Prostate gland (tissue), 2 donors: ENCODE measurements at regions of chr13 and their contacts with region 1.

Region 1: GRCh38 chr13:72781451-72782439 is at the starts of genes DIS3 and PIBF1:
- DNase-seq: peak; percentile 97
- H3K4me3 ChIP-seq: peak within 1 kb of the TSS; percentile 83 to 90
- H3K27ac ChIP-seq: peak within 1 kb of the TSS; percentile 68 to 75
- H3K4me1 ChIP-seq: peaks cover 3% of the 10 kb centered on the region
- H3K27me3 ChIP-seq: no peaks in the 10 kb centered on the region
- CTCF ChIP-seq: no peak
- POLR2A ChIP-seq: peak; percentile 76
- total RNA-seq, gene DIS3: 21.1 to 29.5 TPM
- total RNA-seq, gene PIBF1: 19.9 to 24.9 TPM

Region 2: DNA sequence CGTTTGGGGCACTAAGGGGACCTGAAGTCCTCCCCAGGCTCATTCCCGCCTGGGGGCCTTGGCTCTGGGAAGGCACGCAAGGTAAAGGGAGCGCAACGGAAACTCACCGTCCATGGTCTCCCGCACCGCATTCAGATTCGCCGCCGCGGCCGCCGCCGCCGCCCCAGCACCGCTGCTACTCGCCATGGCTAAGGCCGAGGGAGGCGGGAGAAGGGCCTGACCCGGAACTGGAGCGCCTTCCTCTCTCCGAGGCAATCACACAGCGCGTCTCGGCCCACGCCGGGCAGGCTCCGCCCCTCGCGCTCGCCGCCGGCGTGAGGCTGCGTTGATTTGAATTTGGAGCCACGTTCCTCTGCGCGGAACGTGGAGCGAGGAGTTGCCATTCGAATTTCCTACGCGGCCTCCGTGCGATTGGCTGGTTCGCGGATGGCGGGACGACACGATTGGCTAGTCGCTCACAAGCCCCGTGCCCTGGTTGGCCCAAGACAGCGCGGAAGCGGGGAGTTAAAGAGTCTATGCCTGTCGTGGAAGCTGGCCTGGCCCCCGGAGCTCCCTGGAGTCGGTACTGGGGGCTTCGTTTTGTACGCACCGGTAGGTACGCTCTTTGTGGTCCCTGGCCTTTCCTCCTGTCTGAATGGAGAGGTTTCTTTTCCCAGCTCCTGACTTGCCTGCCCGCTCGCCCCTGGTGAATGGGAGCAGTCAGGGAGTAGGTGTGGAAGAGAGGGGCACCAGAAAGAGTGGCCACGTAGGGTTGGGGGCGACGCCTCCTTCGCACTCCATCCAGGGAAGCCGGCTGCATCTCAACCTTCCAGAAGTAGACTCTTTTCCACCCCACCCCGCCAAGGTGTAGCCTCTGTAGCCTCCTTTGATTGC is 54.1 kb before region 1 on chr13 and contains the starts of genes BORA and MZT1:
- intact Hi-C with region 1: loop called (anchors 1 kb)
- DNase-seq: peak; percentile 93
- H3K4me3 ChIP-seq: peak within 1 kb of the TSS; percentile 71 to 76
- H3K27ac ChIP-seq: peak within 1 kb of the TSS; percentile 20 to 56
- H3K4me1 ChIP-seq: no peaks in the 10 kb centered on the region
- H3K27me3 ChIP-seq: no peaks in the 10 kb centered on the region
- CTCF ChIP-seq: no peak
- POLR2A ChIP-seq: peak; percentile 50
- total RNA-seq, gene BORA: 3.7 to 6.5 TPM
- total RNA-seq, gene MZT1: 2.8 to 5.4 TPM